BJ (cell line): ENCODE measurements at regions of chr9 and their contacts with region 1.

Region 1: DNA sequence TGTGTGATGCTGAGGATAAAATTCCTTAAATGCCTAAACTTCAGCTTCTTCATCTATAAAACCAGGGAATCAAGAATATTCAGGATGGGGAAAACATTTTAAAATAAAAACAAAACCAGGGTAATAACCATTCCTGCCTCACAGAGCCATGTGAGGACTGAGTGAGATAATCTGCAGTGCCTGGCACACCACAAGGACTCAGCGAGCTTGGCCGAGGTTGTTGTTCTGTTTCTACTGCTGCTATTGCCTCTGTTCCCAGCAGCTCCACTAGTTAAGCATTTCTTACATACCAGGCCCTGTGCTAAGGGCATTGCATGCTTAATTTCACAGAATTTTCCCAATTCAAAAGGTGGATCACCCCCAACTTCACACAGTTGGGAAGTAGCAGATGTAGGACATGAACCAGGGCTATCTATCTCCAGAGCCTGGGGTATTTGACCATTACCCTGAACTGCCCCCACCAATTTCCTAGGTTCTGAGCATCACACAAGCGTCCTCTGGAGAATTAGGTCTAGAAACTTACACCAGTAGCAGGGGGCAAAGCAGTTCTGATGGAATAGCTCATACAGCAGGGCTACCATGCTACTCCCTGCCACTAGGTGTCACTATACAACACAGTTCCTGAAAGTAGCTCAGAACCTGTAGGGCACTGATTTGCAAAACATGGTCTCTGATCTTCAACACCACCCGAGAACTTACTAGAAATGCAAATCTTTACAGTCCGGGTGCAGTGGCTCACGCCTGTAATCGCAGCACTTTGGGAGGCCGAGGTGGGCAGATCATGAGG is 74.3 kb downstream of the LRSAM1 start:
- DNase-seq: no peak
- H3K4me3 ChIP-seq: no peak overlapping the region
- H3K27me3 ChIP-seq: no peaks in the 10 kb centered on the region
- CTCF ChIP-seq: peak; percentile 74

Region 2: GRCh38 chr9:127503947-127504782 is 21.4 kb before region 1 on chr9:
- CTCF ChIA-PET with region 1: interaction called, 14 read pairs
- POLR2A ChIA-PET with region 1: no interaction called
- DNase-seq: no peak
- H3K4me3 ChIP-seq: no peak overlapping the region
- H3K27me3 ChIP-seq: no peaks in the 10 kb centered on the region
- CTCF ChIP-seq: peak; percentile 90

Region 3: DNA sequence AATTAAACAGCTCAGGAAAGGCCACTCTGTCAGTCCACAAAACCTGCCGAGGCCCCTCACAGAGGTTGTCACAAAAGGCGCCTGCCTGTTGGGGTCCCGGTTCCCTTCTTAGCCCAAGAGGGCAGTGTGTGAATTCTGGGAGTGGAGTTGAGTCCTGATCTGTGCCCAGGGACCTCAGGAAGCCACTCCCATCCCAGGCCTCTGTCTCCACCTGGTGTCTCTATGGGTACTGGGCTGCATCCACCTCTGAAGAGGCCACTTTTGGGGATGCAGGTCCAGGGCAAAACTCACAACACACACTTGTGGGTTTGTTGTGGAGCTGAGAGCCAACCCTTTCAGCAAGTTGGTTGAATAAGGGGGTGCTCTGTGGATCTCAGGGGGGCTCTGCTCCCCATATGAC is 12.2 kb after region 1 on chr9:
- CTCF ChIA-PET with region 1: interaction called, 49 read pairs
- POLR2A ChIA-PET with region 1: interaction called, 4 read pairs
- DNase-seq: no peak
- H3K4me3 ChIP-seq: no peak overlapping the region
- H3K27me3 ChIP-seq: no peaks in the 10 kb centered on the region
- CTCF ChIP-seq: peak; percentile 47

Region 4: GRCh38 chr9:127561619-127562500 is 36.3 kb after region 1 on chr9:
- CTCF ChIA-PET with region 1: interaction called, 21 read pairs
- POLR2A ChIA-PET with region 1: interaction called, 5 read pairs
- DNase-seq: peak; percentile 98
- H3K4me3 ChIP-seq: no peak overlapping the region
- H3K27me3 ChIP-seq: no peaks in the 10 kb centered on the region
- CTCF ChIP-seq: no peak

Region 5: DNA sequence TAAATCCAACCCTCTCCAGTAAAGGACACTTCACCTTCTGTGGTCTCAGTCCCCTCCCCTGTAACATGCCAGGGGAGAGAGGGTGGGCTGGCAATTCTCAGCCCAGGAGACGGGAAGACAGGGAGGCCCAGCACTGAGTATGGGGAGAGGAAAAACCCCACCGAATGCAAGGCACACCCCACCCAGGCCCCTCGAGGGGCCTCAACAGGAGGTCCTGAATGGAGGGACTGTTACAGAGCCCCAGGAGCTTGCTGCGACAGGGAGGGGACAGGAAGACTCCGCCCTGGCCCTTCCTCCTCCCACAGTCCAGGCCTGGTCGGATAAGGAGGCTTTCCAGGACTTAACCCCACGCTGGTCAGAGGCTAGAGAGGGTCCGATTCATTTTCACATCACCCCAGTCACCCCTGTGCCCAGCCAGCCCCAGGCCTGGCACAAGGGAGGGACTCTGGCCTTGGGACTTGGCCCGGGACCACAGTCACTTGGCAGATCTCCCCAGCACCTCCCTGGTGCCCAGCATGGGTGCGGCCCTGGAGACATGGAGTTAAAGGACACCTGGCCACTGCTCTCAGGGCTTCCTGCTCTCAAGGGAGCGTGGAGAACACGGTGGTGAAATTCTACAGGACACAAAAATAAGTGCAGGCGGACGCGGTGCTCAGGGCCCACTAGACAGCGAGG is 41.6 kb after region 1 on chr9:
- CTCF ChIA-PET with region 1: interaction called, 10 read pairs
- POLR2A ChIA-PET with region 1: interaction called, 5 read pairs
- DNase-seq: no peak
- H3K4me3 ChIP-seq: peak overlapping the region; percentile 97
- H3K27me3 ChIP-seq: no peaks in the 10 kb centered on the region
- CTCF ChIP-seq: no peak

Region 6: DNA sequence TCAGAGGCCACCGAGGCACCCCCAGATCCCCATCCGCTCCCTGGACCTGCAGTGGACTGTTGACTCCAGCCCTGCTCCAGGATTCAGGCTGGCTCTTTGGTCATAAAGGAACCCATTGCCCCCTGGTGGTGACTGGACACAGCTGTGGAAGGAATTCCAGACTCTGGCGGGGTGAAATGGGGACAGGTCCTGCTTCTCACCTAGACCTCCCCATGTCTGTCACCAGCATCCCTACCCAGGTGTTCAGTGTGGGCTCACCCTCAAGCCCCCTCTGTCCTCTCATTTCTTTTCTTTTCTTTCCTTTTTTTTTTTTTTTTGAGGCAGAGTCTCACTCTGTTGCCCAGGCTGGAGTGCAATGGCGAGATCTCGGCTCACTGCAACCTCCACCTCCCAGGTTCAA is 60.9 kb after region 1 on chr9:
- CTCF ChIA-PET with region 1: interaction called, 40 read pairs
- POLR2A ChIA-PET with region 1: interaction called, 8 read pairs
- DNase-seq: no peak
- H3K4me3 ChIP-seq: no peak overlapping the region
- H3K27me3 ChIP-seq: no peaks in the 10 kb centered on the region
- CTCF ChIP-seq: peak; percentile 91

Region 7: DNA sequence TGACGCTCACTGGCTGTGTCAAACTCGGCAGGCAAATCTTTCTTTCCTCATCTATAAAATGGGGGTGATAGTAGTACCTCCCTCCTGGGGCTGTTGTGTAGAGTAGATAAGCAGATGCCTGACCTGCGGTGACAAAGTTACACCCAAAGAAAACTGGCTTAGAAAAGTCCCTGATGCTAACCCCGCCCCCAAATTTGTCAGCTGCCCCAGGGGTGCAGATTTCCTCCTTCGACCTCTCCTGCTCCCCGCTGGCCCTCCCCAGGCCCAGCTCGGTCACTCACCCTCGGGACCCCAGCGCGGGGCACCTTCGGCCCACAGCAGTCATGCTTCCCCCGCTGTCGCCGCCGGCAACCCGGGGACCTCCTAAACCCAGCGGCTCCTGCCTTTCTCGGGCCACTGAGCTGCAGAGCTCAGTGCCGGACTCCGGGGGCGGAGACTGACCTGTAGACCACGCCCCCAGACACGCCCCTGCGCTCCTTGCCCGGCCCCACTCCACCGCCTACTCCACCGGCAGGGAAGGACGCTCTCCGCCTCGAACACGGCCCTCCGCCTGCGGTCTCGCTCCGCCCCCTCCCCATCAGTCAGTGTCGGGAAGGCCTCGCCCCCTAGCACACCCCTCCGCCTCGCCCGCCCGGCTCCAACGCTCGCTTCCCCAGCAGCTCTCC is 245.4 kb after region 1 on chr9:
- CTCF ChIA-PET with region 1: no interaction called
- POLR2A ChIA-PET with region 1: no interaction called
- DNase-seq: peak; percentile 82
- H3K4me3 ChIP-seq: peak overlapping the region; percentile 42
- H3K27me3 ChIP-seq: peaks cover 6% of the 10 kb centered on the region; the same call in 1 of the 2 replicates
- CTCF ChIP-seq: no peak